Caco-2 (cell line): ENCODE measurements at regions of chr1 and their contacts with region 1.

Region 1: DNA sequence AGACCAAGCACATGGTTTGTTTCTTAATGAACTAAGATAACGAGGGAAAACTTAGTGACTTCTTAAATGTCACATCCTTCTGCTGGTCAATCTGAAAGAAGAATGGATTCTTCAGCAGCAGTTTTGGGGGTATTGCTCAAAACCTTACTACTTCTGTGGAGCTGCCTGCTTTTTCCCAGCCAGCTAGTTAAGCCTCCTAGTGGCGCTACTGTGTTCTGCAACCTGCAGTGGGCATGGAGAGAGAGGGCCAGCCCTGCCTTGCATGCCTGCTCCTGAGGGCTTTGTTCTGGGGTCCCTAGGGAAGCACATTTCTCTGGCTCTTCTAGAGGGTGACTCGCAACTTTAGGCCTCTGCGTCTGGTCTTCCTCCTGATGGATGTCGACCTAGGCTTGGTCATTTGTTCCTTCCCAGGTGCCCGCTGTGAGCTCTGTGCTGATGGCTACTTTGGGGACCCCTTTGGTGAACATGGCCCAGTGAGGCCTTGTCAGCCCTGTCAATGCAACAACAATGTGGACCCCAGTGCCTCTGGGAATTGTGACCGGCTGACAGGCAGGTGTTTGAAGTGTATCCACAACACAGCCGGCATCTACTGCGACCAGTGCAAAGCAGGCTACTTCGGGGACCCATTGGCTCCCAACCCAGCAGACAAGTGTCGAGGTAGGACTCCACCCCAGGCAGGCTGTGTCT is 42.0 kb downstream of the LAMC2 start:
- DNase-seq: peak; percentile 68 to 71
- H3K4me3 ChIP-seq: no peak overlapping the region
- H3K4me3 Mint-ChIP-seq: no peak overlapping the region
- H3K27ac Mint-ChIP-seq: peak overlapping the region; percentile 49
- H3K4me1 ChIP-seq: peaks cover 51% of the 10 kb centered on the region
- H3K4me1 Mint-ChIP-seq: peaks cover 25% of the 10 kb centered on the region
- H3K27me3 ChIP-seq: no peaks in the 10 kb centered on the region
- H3K27me3 Mint-ChIP-seq: no peaks in the 10 kb centered on the region
- CTCF ChIP-seq: peak; percentile 61 to 68

Region 2: DNA sequence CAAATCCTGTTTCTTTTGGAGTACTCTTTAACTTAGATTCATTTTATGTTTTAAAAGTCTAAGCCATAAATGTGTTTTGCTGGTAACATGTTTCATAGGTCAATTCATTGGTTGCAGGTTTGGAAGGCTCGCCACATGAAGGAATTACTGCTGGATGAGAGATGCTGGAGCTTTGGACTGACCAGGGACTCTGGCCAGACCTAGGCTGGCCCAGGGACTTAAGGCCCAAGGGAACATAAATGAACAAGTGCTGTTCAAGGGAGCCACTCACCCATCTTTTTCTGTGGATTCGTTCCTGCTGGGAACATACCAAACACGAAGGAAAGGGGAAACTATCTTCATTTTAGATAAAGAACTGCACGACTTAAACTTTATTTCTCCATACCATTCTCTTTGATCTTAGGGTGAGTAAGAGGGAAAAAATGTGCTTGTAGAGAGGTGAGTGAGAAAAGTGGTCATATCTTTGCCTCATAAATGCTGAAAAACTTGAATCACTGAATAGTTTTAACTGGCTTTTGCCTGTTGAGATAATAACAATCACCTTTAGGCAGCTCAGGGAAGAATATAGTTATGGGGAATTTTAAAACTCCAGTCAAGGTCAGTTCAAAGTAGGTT is 259.8 kb before region 1 on chr1:
- CTCF ChIA-PET with region 1: no interaction called
- POLR2A ChIA-PET with region 1: interaction called, 3 read pairs
- intact Hi-C with region 1: loop called (anchors 2 kb)
- DNase-seq: peak; percentile 41 to 53
- H3K4me3 ChIP-seq: no peak overlapping the region
- H3K4me3 Mint-ChIP-seq: peak overlapping the region; percentile 52
- H3K27ac Mint-ChIP-seq: peak overlapping the region; percentile 92
- H3K4me1 ChIP-seq: peaks cover 84% of the 10 kb centered on the region
- H3K4me1 Mint-ChIP-seq: peaks cover 21% of the 10 kb centered on the region
- H3K27me3 ChIP-seq: no peaks in the 10 kb centered on the region
- H3K27me3 Mint-ChIP-seq: no peaks in the 10 kb centered on the region
- CTCF ChIP-seq: no peak

Region 3: GRCh38 chr1:183139281-183139942 is 88.7 kb before region 1 on chr1:
- CTCF ChIA-PET with region 1: no interaction called
- POLR2A ChIA-PET with region 1: no interaction called
- intact Hi-C with region 1: loop called (anchors 1 kb)
- DNase-seq: peak in 1 of 2 experiments; percentile 30
- H3K4me3 ChIP-seq: no peak overlapping the region
- H3K4me3 Mint-ChIP-seq: peak overlapping the region; percentile 47
- H3K27ac Mint-ChIP-seq: peak overlapping the region; percentile 82
- H3K4me1 ChIP-seq: peaks cover 28% of the 10 kb centered on the region; the same call in 1 of the 2 replicates
- H3K4me1 Mint-ChIP-seq: peaks cover 11% of the 10 kb centered on the region
- H3K27me3 ChIP-seq: no peaks in the 10 kb centered on the region
- H3K27me3 Mint-ChIP-seq: no peaks in the 10 kb centered on the region
- CTCF ChIP-seq: no peak

Region 4: DNA sequence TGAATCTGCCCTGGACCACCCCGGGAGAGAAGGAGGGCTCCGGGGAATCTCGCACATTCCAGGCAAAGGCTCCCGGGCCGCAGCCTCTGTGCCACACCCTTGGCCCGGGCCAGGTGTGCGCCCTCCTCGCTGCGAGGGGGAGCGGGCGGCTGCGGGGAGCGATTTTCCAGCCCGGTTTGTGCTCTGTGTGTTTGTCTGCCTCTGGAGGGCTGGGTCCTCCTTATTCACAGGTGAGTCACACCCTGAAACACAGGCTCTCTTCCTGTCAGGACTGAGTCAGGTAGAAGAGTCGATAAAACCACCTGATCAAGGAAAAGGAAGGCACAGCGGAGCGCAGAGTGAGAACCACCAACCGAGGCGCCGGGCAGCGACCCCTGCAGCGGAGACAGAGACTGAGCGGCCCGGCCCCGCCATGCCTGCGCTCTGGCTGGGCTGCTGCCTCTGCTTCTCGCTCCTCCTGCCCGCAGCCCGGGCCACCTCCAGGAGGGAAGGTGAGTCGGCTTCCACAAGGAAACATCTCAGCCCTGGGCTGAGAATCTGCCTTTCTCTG is 42.1 kb before region 1 on chr1 and contains the start of gene LAMC2:
- CTCF ChIA-PET with region 1: no interaction called
- POLR2A ChIA-PET with region 1: no interaction called
- intact Hi-C with region 1: loop called (anchors 2 kb)
- DNase-seq: peak; percentile 90
- H3K4me3 ChIP-seq: peak within 1 kb of the TSS; percentile 69
- H3K4me3 Mint-ChIP-seq: peak within 1 kb of the TSS; percentile 87
- H3K27ac Mint-ChIP-seq: peak within 1 kb of the TSS; percentile 89
- H3K4me1 ChIP-seq: peaks cover 17% of the 10 kb centered on the region
- H3K4me1 Mint-ChIP-seq: peaks cover 13% of the 10 kb centered on the region
- H3K27me3 ChIP-seq: no peaks in the 10 kb centered on the region
- H3K27me3 Mint-ChIP-seq: no peaks in the 10 kb centered on the region
- CTCF ChIP-seq: peak; percentile 61 to 73
- total RNA-seq, gene LAMC2: 34.9 and 51.0 TPM in 2 replicates

Region 5: DNA sequence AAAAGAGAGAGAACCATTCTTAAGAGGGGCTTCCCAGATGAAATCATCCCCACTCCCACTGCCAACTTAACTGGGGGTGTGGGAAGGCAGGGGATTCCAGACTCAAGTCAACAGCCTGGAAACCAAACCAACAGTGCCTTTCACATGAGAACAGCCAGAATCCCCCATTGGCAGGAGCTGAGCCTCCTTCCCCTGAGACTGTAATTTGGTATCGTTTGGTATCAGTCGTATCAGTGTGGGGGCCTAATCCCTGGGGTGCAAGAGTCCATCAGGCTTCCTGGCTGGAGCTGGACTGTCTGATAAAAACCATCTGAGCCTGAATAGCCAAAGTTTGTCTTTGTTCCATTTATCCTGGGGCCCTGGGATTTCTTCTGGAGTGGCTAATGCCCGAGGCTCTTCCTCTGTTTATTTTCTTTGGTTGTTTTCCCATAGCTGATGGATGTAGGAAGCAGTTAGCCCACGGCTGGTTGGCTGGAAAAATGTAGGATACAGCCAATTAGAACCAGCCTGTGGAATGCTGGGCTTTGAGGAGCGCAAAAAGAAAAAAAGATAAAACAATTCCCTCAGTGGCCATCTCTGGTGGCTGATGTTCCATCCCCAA is 42.5 kb after region 1 on chr1:
- CTCF ChIA-PET with region 1: no interaction called
- POLR2A ChIA-PET with region 1: no interaction called
- intact Hi-C with region 1: loop called (anchors 1 kb)
- DNase-seq: peak; percentile 27 to 73
- H3K4me3 ChIP-seq: no peak overlapping the region
- H3K4me3 Mint-ChIP-seq: peak overlapping the region; percentile 41
- H3K27ac Mint-ChIP-seq: peak overlapping the region; percentile 42
- H3K4me1 ChIP-seq: peaks cover 52% of the 10 kb centered on the region
- H3K4me1 Mint-ChIP-seq: peaks cover 35% of the 10 kb centered on the region
- H3K27me3 ChIP-seq: no peaks in the 10 kb centered on the region
- H3K27me3 Mint-ChIP-seq: no peaks in the 10 kb centered on the region
- CTCF ChIP-seq: no peak

Region 6: DNA sequence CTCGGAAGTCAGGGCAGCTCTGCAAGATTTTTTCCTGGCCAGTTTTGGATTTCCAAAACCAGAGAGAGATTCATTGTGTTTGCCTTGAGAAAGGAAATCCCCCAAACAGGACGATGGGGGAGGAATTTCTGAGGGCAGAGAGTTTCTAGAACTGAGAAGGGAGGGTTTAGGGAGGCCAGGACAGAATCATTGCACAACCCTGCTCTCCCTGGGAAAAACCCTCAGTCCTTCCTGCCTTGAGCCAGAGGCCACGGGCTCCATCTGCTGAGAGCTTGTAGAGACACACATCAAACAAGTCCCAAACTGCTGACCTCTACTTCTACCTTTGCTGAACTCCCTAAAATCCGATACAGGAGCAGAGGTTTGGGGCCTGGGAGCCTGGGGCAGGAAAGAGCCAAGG is 90.3 kb after region 1 on chr1:
- CTCF ChIA-PET with region 1: no interaction called
- POLR2A ChIA-PET with region 1: no interaction called
- intact Hi-C with region 1: no loop called
- DNase-seq: peak; percentile 57 to 67
- H3K4me3 ChIP-seq: no peak overlapping the region
- H3K4me3 Mint-ChIP-seq: no peak overlapping the region
- H3K27ac Mint-ChIP-seq: no peak overlapping the region
- H3K4me1 ChIP-seq: 0 out of 2 replicates have a peak, but pooled peaks cover 7% of the 10 kb centered on the region
- H3K4me1 Mint-ChIP-seq: peaks cover under 1% of the 10 kb centered on the region
- H3K27me3 ChIP-seq: no peaks in the 10 kb centered on the region
- H3K27me3 Mint-ChIP-seq: no peaks in the 10 kb centered on the region
- CTCF ChIP-seq: peak; percentile 51 to 66